Activated T-helper 2 cell treated with anti-CD3 and anti-CD28 coated beads, Interferon-gamma antibody, Interleukin-2, Interleukin-4, amounts not matched to agents 10 μg/mL and 5 μg/mL and 100 μg/mL, durations not matched to agents 14 hours and 24 hours and 36 hours (primary cell): ENCODE measurements at regions of chr3 and their contacts with region 1.

Region 1: DNA sequence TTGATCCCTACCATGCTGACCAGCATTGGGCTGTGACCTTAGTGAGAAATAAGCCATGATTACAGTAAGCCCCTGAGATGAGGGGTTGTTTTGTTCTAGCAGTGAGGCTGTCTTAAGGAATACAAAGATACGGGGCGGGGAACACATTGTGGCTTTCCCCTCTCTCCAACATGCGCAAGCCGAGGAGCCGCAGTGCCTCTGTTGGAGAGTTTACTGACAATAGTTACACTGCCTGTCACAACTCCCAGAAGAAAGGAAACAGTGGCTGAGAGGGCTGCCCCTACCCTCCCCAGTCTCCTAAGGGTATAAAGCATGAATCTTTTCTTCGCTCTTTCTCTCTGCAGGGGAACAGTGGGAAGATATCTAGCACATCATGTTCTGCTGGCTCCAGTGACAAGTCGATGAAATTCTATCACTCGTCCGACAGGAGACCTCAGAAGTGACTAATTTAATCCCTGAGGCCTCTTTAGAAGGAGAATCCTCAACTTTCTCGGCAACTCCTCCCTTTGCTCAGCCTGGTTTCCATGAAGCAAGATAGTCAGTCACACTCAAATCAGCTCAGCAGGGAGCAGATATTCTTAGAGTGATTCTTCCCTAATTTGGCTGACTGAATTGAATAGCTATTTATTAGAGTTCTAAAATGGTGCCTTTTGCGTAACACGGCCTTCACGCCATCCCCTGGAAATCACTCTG is 409.0 kb upstream of the PROK2 start:
- DNase-seq: no peak
- H3K4me3 Mint-ChIP-seq: no peak overlapping the region
- H3K27ac Mint-ChIP-seq: no peak overlapping the region
- H3K4me1 Mint-ChIP-seq: peaks cover 7% of the 10 kb centered on the region
- H3K27me3 Mint-ChIP-seq: no peaks in the 10 kb centered on the region

Region 2: GRCh38 chr3:71838406-71838805 is 355.5 kb before region 1 on chr3:
- intact Hi-C with region 1: no loop called
- DNase-seq: no peak
- H3K4me3 Mint-ChIP-seq: no peak overlapping the region
- H3K27ac Mint-ChIP-seq: no peak overlapping the region
- H3K4me1 Mint-ChIP-seq: no peaks in the 10 kb centered on the region
- H3K27me3 Mint-ChIP-seq: peaks cover 19% of the 10 kb centered on the region

Region 3: GRCh38 chr3:72158639-72159326 is 35.1 kb before region 1 on chr3:
- intact Hi-C with region 1: loop called (anchors 1 kb)
- DNase-seq: no peak
- H3K4me3 Mint-ChIP-seq: no peak overlapping the region
- H3K27ac Mint-ChIP-seq: no peak overlapping the region
- H3K4me1 Mint-ChIP-seq: peaks cover 6% of the 10 kb centered on the region
- H3K27me3 Mint-ChIP-seq: peaks cover 10% of the 10 kb centered on the region